Astrocyte of the cerebellum (primary cell): ENCODE measurements at regions of chr4 and their contacts with region 1.

Region 1: GRCh38 chr4:101282076-101282844 is 65.1 kb downstream of the PPP3CA start:
- DNase-seq: no peak
- H3K4me3 ChIP-seq: no peak overlapping the region
- CTCF ChIP-seq: no peak

Region 2: DNA sequence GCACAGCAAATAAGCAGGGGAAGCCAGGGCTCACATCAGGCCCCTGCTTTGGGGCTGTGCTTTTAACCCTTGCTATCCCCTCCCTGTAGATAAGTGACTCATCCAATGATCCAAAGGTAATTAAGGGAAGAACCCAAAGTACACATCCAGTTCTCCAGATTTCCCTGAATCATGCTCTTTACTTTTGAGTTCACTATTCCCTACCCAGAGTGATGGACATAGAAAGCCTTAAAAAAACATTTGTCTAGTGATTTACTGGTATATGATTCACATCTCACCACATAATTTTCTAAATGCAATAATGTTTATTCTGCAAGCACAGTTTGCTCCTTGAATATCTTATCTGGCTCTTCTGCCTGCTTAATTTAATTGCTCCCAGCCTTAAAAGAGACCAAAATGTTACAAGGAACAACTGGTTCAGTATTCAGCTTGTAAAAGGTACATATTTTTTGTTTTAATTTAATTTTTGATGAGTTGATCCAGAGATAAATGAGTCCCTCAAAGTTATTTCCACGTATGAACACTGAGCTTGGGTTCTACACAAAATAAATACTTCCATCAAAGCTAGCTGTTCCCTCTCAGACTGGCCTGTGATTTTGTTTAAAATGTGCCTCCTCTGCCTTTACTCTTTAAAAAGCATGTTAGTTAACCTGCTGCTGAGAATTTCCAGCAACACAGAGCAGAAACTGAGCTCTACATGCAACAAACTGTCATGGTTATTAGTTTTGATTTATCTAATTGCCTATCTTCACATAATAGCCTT is 70.9 kb before region 1 on chr4:
- in situ Hi-C with region 1: no loop called
- DNase-seq: no peak
- H3K4me3 ChIP-seq: no peak overlapping the region
- CTCF ChIP-seq: no peak

Region 3: GRCh38 chr4:101347557-101348366 is 65.5 kb after region 1 on chr4:
- in situ Hi-C with region 1: loop called (anchors 5 kb)
- DNase-seq: peak; percentile 93
- H3K4me3 ChIP-seq: peak overlapping the region; percentile 79
- CTCF ChIP-seq: peak; percentile 18